GM12878 (cell line): ENCODE measurements at regions of chrX and their contacts with region 1.

Region 1: DNA sequence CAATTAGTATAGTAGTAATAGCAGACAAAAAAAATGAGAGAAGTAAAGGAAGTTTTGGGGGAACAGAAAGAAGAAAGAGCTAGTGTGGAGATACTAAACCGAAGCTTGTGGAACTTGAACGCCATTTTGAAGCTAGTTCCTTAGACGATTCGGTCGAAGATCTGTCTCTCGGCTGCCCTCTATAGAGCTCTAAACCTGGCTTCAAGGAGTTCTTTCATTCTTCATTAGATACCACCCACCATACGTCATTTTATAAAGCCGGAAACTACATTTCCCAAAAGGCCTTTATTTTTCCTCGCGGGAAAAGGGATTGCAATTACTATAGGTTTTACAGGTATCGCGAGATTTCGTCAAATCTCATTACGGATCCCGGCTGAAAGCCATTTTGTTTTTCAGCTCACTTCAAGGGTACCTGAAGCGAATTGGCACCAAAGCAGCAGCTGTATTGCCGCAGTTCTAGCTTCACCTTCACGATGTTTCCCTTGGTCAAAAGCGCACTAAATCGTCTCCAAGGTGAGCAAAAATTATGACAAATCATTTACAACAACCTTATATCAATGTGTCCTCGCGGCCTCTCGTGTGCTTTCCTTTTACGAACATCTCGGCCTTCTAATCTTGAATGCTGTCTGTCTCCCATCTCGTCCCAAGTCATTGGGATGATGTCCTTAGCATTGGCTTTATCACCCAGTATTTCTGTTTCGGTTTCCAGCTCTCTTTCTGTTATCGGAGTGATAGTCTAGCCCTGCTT is at the start of gene COX7B:
- DNase-seq: peak; percentile 92
- ATAC-seq: peak; percentile 70
- H3K4me3 ChIP-seq: peak within 1 kb of the TSS; percentile 80
- H3K27ac ChIP-seq: peak within 1 kb of the TSS; percentile 75
- H3K4me1 ChIP-seq: no peaks in the 10 kb centered on the region
- H3K27me3 ChIP-seq: no peaks in the 10 kb centered on the region
- CTCF ChIP-seq: peak; percentile 35 to 54 (median 41); a peak in 4 of 6 replicates
- EP300 ChIP-seq: no peak
- POLR2A ChIP-seq: peak; percentile 78
- RAD21 ChIP-seq: peak; percentile 54
- polyA plus RNA-seq, gene COX7B: 2,041 to 2,070 TPM

Region 2: DNA sequence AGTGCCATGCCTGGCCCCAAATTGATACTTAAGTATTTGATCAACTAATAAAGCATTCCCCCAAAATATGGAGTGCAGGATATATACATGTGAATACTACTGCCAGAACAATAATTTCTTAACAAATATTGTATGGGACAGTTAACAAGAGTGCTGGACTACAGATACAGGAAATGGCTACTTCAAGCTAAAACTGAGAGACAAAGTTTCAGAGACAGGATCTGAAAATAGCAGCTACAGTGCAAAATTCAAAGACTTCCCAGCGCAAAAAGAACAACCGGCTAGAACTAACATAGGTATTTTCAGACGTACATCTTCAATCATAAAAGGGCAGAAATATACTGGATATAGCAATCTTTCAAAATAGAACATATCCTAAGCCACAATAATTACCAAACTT is 119.6 kb before region 1 on chrX:
- CTCF ChIA-PET with region 1: no interaction called
- POLR2A ChIA-PET with region 1: interaction called, 5 read pairs
- RAD21 ChIA-PET with region 1: interaction called, 3 read pairs
- SMC1A ChIA-PET with region 1: no interaction called
- in situ Hi-C with region 1: no loop called
- intact Hi-C with region 1: loop called (anchors 5 kb)
- DNase-seq: no peak
- ATAC-seq: peak; percentile 48
- H3K4me3 ChIP-seq: 0 out of 2 replicates have a peak overlapping the region, but pooled peaks have one; percentile 3
- H3K27ac ChIP-seq: no peak overlapping the region
- H3K4me1 ChIP-seq: no peaks in the 10 kb centered on the region; the same call in 1 of the 2 replicates
- H3K27me3 ChIP-seq: no peaks in the 10 kb centered on the region
- CTCF ChIP-seq: no peak
- EP300 ChIP-seq: no peak
- POLR2A ChIP-seq: no peak
- RAD21 ChIP-seq: no peak

Region 3: GRCh38 chrX:77917294-77917933 is 18.2 kb after region 1 on chrX:
- CTCF ChIA-PET with region 1: interaction called, 21 read pairs
- POLR2A ChIA-PET with region 1: interaction called, 9 read pairs
- RAD21 ChIA-PET with region 1: interaction called, 17 read pairs
- SMC1A ChIA-PET with region 1: interaction called, 8 read pairs
- in situ Hi-C with region 1: no loop called
- intact Hi-C with region 1: no loop called
- DNase-seq: no peak
- ATAC-seq: peak; percentile 76
- H3K4me3 ChIP-seq: peak overlapping the region; percentile 48
- H3K27ac ChIP-seq: peak overlapping the region; percentile 64
- H3K4me1 ChIP-seq: no peaks in the 10 kb centered on the region
- H3K27me3 ChIP-seq: no peaks in the 10 kb centered on the region
- CTCF ChIP-seq: no peak
- EP300 ChIP-seq: no peak
- POLR2A ChIP-seq: no peak
- RAD21 ChIP-seq: no peak

Region 4: GRCh38 chrX:78029663-78030062 is 130.4 kb after region 1 on chrX:
- CTCF ChIA-PET with region 1: interaction called, 30 read pairs
- POLR2A ChIA-PET with region 1: interaction called, 3 read pairs
- RAD21 ChIA-PET with region 1: interaction called, 20 read pairs
- SMC1A ChIA-PET with region 1: interaction called, 17 read pairs
- in situ Hi-C with region 1: loop called (anchors 10 kb)
- intact Hi-C with region 1: no loop called
- DNase-seq: no peak
- ATAC-seq: peak; percentile 71
- H3K4me3 ChIP-seq: no peak overlapping the region
- H3K27ac ChIP-seq: no peak overlapping the region
- H3K4me1 ChIP-seq: no peaks in the 10 kb centered on the region
- H3K27me3 ChIP-seq: no peaks in the 10 kb centered on the region
- CTCF ChIP-seq: peak; percentile 18 to 76 (median 41); a peak in 4 of 6 replicates
- EP300 ChIP-seq: no peak
- POLR2A ChIP-seq: no peak
- RAD21 ChIP-seq: peak; percentile 44